Body of pancreas (tissue), 4 donors: ENCODE measurements at regions of chr10 and their contacts with region 1.

Region 1: GRCh38 chr10:25875556-25876165 is 58.4 kb upstream of the MYO3A start:
- DNase-seq: peak; percentile 77 to 86 (median 80)
- ATAC-seq: peak; percentile 74
- H3K4me3 ChIP-seq: no peak overlapping the region
- H3K27ac ChIP-seq: no peak overlapping the region
- H3K4me1 ChIP-seq: no peaks in the 10 kb centered on the region
- H3K27me3 ChIP-seq: no peaks in the 10 kb centered on the region
- CTCF ChIP-seq: peak; percentile 76 to 84 (median 77)
- POLR2A ChIP-seq: no peak

Region 2: GRCh38 chr10:26048756-26049155 is 173.1 kb after region 1 on chr10:
- intact Hi-C with region 1: no loop called
- DNase-seq: no peak
- ATAC-seq: no peak
- H3K4me3 ChIP-seq: no peak overlapping the region
- H3K27ac ChIP-seq: no peak overlapping the region
- H3K4me1 ChIP-seq: no peaks in the 10 kb centered on the region
- H3K27me3 ChIP-seq: no peaks in the 10 kb centered on the region
- CTCF ChIP-seq: no peak
- POLR2A ChIP-seq: no peak

Region 3: GRCh38 chr10:26556748-26557640 is 681.3 kb after region 1 on chr10:
- intact Hi-C with region 1: loop called (anchors 10 kb)
- DNase-seq: peak; percentile 18 to 55 (median 34)
- ATAC-seq: peak; percentile 67
- H3K4me3 ChIP-seq: no peak overlapping the region
- H3K27ac ChIP-seq: no peak overlapping the region
- H3K4me1 ChIP-seq: peaks cover 10% of the 10 kb centered on the region
- H3K27me3 ChIP-seq: no peaks in the 10 kb centered on the region
- CTCF ChIP-seq: peak; percentile 46 to 92 (median 84)
- POLR2A ChIP-seq: no peak